ENCODE measurements at regions of chr18 and their contacts with region 1.

Region 1: DNA sequence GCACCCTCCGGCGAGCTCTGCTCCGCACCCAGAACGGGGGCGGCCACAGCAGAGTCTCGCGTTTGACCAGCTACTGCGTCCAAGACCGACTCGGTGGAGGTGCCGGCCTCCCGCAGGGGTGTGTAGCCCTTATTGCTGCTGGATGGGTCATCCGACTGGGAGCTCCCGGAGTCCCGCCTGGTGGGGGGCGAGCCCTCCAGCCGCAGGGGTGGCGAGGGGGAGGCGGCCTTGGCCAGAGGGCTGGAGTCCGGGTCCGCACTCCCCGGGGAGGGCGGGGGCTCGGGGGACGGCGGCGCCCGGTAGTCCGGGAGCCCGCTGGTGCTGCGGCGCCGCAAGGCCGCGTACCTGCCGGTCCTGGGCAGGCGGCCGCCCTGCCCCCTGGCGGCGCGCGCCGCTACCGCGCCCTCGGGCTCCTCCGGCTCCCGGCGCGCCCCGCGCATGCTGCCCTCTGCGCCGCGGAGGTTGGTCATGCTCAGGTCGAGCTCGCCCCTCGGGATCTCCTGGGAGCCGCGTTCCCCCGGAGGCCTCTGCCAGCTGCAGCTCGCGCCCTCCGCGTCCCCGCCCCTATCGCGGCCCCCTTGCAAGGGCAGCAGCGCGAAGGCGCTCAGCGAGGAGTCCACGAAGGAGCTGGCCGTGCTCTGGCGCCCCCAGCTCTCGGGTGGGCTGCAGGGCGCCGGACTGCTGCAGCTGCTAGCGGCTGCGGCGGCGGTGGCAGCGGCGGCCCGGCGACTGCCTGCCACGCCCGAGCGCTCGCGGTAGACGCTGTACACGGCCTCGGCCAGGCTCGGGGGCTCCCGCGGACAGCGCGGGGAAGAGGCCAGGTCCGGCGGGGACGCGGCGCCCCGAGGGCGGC is 4.8 kb downstream of the TMEM200C start:
- DNase-seq: peak in 6 of 10 donors; percentile 22 to 63 (median 43)
- H3K4me3 ChIP-seq: peak overlapping the region; percentile 39 to 77 (median 60)
- H3K27ac ChIP-seq: peak overlapping the region in 51 of 59 donors; percentile 17 to 87 (median 61)
- H3K27me3 ChIP-seq: peaks cover 0 to 43% (median 11%) of the 10 kb centered on the region in 45 donors
- CTCF ChIP-seq: peak in 47 of 56 donors; percentile 18 to 76 (median 50)

Region 2: GRCh38 chr18:5972298-5972697 is 81.7 kb after region 1 on chr18:
- intact Hi-C with region 1: loop called in 1 of 2 experiments (anchors 5 kb)
- DNase-seq: no peak
- H3K4me3 ChIP-seq: no peak overlapping the region
- H3K27ac ChIP-seq: peak overlapping the region in 1 of 59 donors; percentile 85
- H3K27me3 ChIP-seq: no peaks in the 10 kb centered on the region
- CTCF ChIP-seq: no peak

Region 3: GRCh38 chr18:6885992-6886796 is 995.6 kb after region 1 on chr18:
- intact Hi-C with region 1: no loop called
- DNase-seq: peak in 3 of 10 donors; percentile 14 to 58 (median 28)
- H3K4me3 ChIP-seq: no peak overlapping the region
- H3K27ac ChIP-seq: peak overlapping the region in 1 of 59 donors; percentile 61
- H3K27me3 ChIP-seq: peaks cover 0 to 5% (median 0%) of the 10 kb centered on the region in 45 donors
- CTCF ChIP-seq: peak; percentile 65 to 96 (median 81)